A673 (cell line): ENCODE measurements at regions of chr14 and their contacts with region 1.

Region 1: GRCh38 chr14:105974902-105975301 is 448.5 kb downstream of the TMEM121 start:
- DNase-seq: peak; percentile 83
- H3K4me3 ChIP-seq: no peak overlapping the region
- H3K27ac ChIP-seq: no peak overlapping the region
- H3K4me1 ChIP-seq: no peaks in the 10 kb centered on the region
- H3K27me3 ChIP-seq: peaks cover 8% of the 10 kb centered on the region
- CTCF ChIP-seq: peak; percentile 81

Region 2: DNA sequence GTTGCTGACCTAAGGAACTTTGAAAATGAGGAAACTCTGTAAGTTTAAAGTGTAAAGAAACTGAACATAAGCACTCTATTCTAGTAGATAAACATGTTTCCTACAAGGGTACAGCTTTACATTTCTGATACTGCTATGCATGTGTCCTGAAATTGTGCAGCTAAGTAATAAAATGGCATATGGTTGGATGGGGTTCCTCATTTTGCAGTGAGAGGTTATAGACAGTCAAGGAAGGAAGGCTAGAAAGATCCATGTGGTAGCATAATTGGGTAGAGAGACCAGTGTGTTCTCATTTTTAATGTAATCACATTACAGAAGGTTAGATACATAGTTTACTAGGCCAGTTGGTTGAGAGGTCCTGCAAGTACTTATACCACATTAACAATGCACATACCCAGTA is 28.4 kb after region 1 on chr14:
- CTCF ChIA-PET with region 1: interaction called, 4 read pairs
- POLR2A ChIA-PET with region 1: no interaction called
- intact Hi-C with region 1: loop called (anchors 2 kb)
- DNase-seq: no peak
- H3K4me3 ChIP-seq: no peak overlapping the region
- H3K27ac ChIP-seq: no peak overlapping the region
- H3K4me1 ChIP-seq: no peaks in the 10 kb centered on the region
- H3K27me3 ChIP-seq: no peaks in the 10 kb centered on the region
- CTCF ChIP-seq: no peak

Region 3: DNA sequence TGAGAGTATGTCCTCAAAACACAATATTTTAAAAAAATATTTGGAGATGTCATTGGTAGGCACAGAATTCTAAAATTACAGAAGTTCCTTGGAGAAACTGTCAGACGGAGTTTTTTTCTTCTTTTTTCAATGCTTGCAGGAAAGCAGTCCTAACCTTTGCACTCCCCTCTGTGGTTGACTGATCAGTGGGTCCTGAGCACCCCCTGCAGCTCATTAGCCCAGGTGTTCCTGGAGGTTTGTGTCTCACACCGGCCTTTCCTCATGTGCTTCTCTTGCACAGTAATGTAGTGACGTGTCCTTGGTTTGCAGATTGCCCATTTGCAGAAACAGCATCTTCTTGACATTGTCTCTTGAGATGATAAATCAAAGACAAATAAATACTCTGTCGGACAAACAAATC is 64.5 kb after region 1 on chr14:
- CTCF ChIA-PET with region 1: no interaction called
- POLR2A ChIA-PET with region 1: no interaction called
- intact Hi-C with region 1: loop called (anchors 2 kb)
- DNase-seq: peak; percentile 15
- H3K4me3 ChIP-seq: no peak overlapping the region
- H3K27ac ChIP-seq: no peak overlapping the region
- H3K4me1 ChIP-seq: no peaks in the 10 kb centered on the region
- H3K27me3 ChIP-seq: peaks cover 40% of the 10 kb centered on the region
- CTCF ChIP-seq: peak; percentile 47

Region 4: DNA sequence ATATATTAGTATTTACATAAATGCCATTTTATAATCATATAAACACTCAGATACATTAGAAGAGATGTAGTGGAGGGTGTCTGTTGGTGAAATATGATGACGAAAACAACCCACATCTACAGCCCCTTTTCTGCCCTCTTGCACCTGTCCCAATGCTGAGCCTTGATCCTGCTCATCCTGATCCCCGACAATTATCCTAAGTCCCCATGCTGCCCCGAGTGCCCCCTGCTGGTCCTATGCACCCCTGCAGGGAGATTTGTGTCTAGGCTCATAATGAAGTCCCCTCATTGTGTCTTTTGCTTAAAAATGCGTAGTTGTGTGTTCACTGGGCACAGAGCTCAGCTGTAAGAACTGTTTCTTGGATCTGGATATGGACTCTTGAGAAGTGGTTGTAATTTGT is 106.0 kb after region 1 on chr14:
- CTCF ChIA-PET with region 1: no interaction called
- POLR2A ChIA-PET with region 1: no interaction called
- intact Hi-C with region 1: no loop called
- DNase-seq: no peak
- H3K4me3 ChIP-seq: no peak overlapping the region
- H3K27ac ChIP-seq: no peak overlapping the region
- H3K4me1 ChIP-seq: no peaks in the 10 kb centered on the region
- H3K27me3 ChIP-seq: peaks cover 26% of the 10 kb centered on the region
- CTCF ChIP-seq: 0 out of 2 replicates have a peak, but pooled peaks have one; percentile 17

Region 5: GRCh38 chr14:106302661-106303060 is 327.8 kb after region 1 on chr14:
- CTCF ChIA-PET with region 1: no interaction called
- POLR2A ChIA-PET with region 1: no interaction called
- intact Hi-C with region 1: no loop called
- DNase-seq: no peak
- H3K4me3 ChIP-seq: no peak overlapping the region
- H3K27ac ChIP-seq: no peak overlapping the region
- H3K4me1 ChIP-seq: no peaks in the 10 kb centered on the region
- H3K27me3 ChIP-seq: peaks cover 64% of the 10 kb centered on the region
- CTCF ChIP-seq: no peak